A673 (cell line): ENCODE measurements at regions of chr12 and their contacts with region 1.

Region 1: GRCh38 chr12:38332814-38333213 is 16.2 kb downstream of the ALG10B start:
- DNase-seq: no peak
- H3K4me3 ChIP-seq: no peak overlapping the region
- H3K27ac ChIP-seq: no peak overlapping the region
- H3K4me1 ChIP-seq: no peaks in the 10 kb centered on the region
- H3K27me3 ChIP-seq: no peaks in the 10 kb centered on the region
- CTCF ChIP-seq: no peak

Region 2: DNA sequence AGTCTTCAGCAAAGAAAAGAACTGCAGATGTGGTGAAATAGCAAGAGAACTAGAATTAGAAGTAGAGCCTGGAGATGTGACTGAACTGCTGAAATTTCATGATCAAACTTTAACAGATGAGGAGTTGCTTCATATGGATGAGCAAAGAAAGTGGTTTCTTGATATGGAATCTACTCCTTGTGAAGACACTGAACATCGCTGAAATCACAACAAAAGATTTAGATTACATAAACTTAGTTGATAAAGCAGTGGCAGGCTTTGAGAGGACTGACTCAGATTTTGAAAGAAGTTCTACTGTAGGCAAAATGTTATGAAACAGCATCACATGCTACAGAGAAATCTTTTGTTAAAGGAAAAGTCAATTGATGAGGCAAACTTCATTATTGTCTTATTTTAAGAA is 935.1 kb after region 1 on chr12:
- CTCF ChIA-PET with region 1: no interaction called
- POLR2A ChIA-PET with region 1: no interaction called
- intact Hi-C with region 1: loop called (anchors 10 kb)
- DNase-seq: no peak
- H3K4me3 ChIP-seq: no peak overlapping the region
- H3K27ac ChIP-seq: no peak overlapping the region
- H3K4me1 ChIP-seq: peaks cover 22% of the 10 kb centered on the region
- H3K27me3 ChIP-seq: no peaks in the 10 kb centered on the region
- CTCF ChIP-seq: no peak